ENCODE measurements at regions of chr5 and their contacts with region 1.

Region 1: DNA sequence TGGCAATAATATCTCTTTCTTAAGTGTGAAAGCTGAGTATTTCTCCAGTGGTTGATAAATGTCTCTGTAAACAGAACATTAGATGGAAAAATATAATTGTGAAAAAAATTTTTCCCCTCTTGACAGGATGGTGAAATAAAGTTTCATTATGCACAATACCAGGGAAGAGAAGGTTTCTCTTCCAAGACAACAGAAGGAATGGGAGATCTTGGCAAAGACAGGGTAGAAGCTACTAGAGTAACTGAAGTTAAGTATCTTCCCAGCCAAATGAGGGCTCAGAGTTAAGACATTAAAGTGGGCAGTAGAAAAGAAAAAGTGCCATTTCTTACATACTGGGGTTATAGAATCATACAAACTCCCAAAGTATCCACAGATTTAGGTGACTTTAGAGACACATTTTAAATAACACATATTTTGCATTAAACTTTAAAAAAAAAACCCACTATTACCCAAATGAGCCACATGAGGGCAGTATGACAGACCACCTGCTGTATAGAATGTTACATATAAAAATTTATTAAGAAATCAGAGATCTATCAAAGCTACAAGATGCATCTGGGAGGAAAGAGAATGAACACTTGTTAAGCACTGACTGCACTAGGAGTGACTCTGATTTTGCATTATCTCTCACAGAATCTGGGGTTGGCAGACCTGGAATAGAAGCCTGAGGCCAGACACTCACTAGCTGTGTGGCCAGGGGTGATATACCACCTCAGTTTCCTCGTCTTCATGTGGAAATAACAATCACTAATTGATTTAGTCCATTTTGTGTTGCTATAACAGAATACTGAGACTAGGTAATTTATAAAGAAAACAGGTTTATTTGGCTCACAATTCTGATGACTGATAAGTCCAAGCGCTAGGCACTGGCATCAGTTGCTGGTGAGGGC is 98.5 kb downstream of the ARSB start:
- DNase-seq: peak; percentile 41
- H3K4me3 ChIP-seq: no peak overlapping the region
- H3K27ac ChIP-seq: no peak overlapping the region
- H3K4me1 ChIP-seq: no peaks in the 10 kb centered on the region
- H3K27me3 ChIP-seq: no peaks in the 10 kb centered on the region
- CTCF ChIP-seq: peak; percentile 37 to 51
- POLR2A ChIP-seq: no peak

Region 2: GRCh38 chr5:78320401-78320800 is 566.2 kb before region 1 on chr5:
- CTCF ChIA-PET with region 1: interaction called, 4 read pairs
- POLR2A ChIA-PET with region 1: no interaction called
- dilution Hi-C with region 1: no loop called
- intact Hi-C with region 1: loop called (anchors 2 kb)
- DNase-seq: peak; percentile 66
- H3K4me3 ChIP-seq: no peak overlapping the region
- H3K27ac ChIP-seq: no peak overlapping the region
- H3K4me1 ChIP-seq: no peaks in the 10 kb centered on the region
- H3K27me3 ChIP-seq: no peaks in the 10 kb centered on the region
- CTCF ChIP-seq: peak; percentile 27
- POLR2A ChIP-seq: no peak

Region 3: DNA sequence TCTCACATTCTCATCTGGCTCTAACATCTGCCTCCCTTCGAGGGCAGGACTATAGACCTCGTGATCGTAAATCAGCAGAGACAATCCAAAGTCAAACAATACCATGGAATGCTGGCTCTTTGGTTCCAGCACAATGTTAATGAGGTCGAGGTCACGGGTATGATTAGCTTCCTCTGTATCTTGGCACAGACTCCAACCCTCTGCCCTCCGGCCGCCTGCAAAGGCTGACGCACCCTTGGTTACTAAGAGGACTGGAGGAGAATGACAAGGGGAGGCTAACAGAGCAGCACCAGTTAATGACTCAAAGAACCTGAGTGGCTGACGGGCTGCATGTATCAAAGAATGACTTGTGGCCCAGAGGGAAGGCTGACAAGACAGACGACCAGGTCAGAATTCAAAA is 248.2 kb before region 1 on chr5:
- CTCF ChIA-PET with region 1: no interaction called
- POLR2A ChIA-PET with region 1: no interaction called
- dilution Hi-C with region 1: no loop called
- intact Hi-C with region 1: no loop called
- DNase-seq: peak; percentile 99
- H3K4me3 ChIP-seq: no peak overlapping the region
- H3K27ac ChIP-seq: peak overlapping the region; percentile 90
- H3K4me1 ChIP-seq: peaks cover 40% of the 10 kb centered on the region
- H3K27me3 ChIP-seq: no peaks in the 10 kb centered on the region
- CTCF ChIP-seq: no peak
- POLR2A ChIP-seq: peak; percentile 48

Region 4: GRCh38 chr5:78648359-78649210 is 238.0 kb before region 1 on chr5 and contains the start of gene LHFPL2:
- CTCF ChIA-PET with region 1: interaction called, 13 read pairs
- POLR2A ChIA-PET with region 1: no interaction called
- dilution Hi-C with region 1: no loop called
- intact Hi-C with region 1: loop called (anchors 5 kb)
- DNase-seq: peak; percentile 77
- H3K4me3 ChIP-seq: peak within 1 kb of the TSS; percentile 38 to 78 (median 62)
- H3K27ac ChIP-seq: peak within 1 kb of the TSS; percentile 82
- H3K4me1 ChIP-seq: peaks cover 19% of the 10 kb centered on the region
- H3K27me3 ChIP-seq: no peaks in the 10 kb centered on the region
- CTCF ChIP-seq: no peak
- POLR2A ChIP-seq: no peak
- total RNA-seq, gene LHFPL2: 26.8 and 36.3 TPM in 2 replicates

Region 5: DNA sequence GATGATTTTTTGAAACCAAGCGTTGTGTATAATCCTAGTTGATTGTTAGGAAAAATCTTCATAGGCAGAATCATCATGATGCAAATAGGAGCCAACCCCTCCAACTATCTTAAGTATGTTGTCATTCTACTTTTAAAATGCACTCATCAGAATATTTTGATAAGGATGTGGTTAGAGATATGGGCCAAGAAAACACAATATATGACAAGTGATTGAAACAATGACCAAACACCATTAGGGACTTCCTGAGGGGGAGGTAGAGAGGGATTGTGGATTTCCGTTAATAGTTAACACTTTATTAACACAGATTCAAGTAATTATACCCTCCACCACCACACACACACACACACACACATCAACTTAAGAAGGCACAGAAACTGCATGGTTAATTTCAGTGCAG is 44.8 kb before region 1 on chr5:
- CTCF ChIA-PET with region 1: interaction called, 3 read pairs
- POLR2A ChIA-PET with region 1: no interaction called
- dilution Hi-C with region 1: no loop called
- intact Hi-C with region 1: loop called (anchors 5 kb)
- DNase-seq: peak; percentile 80
- H3K4me3 ChIP-seq: no peak overlapping the region
- H3K27ac ChIP-seq: no peak overlapping the region
- H3K4me1 ChIP-seq: peaks cover 18% of the 10 kb centered on the region
- H3K27me3 ChIP-seq: peaks cover 3 to 9% of the 10 kb centered on the region in 2 experiments
- CTCF ChIP-seq: no peak
- POLR2A ChIP-seq: no peak

Region 6: DNA sequence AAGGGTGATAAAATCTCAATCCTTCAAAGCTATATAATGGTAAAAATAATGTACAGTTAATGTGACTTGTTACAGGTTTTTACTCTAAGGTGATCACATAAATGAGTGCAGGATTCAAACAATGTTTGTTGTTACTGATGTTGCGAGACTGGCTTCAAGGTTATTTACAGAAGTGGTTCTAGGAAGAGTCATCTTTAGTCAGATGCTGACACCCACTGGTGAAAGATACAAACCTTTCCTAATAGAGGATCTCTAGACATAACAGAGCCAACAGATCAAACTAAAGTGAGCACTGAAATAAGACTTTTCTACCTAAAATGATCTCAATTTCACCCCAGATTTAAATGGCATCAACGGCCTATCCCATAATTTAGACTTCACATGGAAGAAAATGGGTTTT is 78.3 kb after region 1 on chr5:
- CTCF ChIA-PET with region 1: interaction called, 12 read pairs
- POLR2A ChIA-PET with region 1: no interaction called
- dilution Hi-C with region 1: no loop called
- intact Hi-C with region 1: no loop called
- DNase-seq: peak; percentile 79
- H3K4me3 ChIP-seq: no peak overlapping the region
- H3K27ac ChIP-seq: no peak overlapping the region
- H3K4me1 ChIP-seq: no peaks in the 10 kb centered on the region
- H3K27me3 ChIP-seq: no peaks in the 10 kb centered on the region
- CTCF ChIP-seq: peak in 1 of 2 donors; percentile 18
- POLR2A ChIP-seq: no peak